PC-3 (cell line): ENCODE measurements at regions of chr18 and their contacts with region 1.

Region 1: DNA sequence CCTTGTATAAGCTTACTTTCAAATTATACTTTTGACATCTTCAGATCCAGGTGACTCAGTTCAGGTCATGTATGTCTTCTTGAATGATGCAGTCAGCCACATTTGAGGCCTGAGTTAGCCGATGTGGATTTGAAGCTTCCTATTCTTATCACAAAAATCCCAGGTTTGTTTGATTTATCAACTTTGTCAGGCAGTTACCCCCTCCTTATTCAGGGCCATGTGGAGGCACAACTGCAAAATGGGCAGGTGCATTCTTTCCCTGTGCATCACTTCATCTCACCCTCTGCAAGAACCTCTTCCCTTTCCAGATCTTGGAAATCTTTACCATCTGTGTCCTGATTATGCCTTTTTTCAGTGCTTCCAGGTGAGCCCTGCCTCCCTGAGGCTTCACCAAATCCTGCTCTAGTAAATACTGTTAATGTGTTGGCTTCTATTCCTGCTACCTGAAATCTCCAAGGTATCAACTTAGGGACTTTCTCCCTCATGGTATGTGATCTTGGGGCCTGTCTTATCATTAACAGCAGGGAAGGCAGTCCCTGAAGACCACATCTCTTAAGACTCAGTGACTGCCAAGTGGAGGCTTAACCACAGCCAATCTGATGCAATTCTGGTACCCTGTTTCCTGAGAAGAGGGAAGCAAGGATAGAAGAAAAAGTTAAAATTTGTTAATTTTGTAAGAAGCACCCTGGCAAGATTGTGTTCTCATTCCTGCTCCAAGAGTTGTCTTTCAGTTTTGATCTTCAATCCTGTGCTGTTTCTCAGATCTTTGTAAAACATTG is 9.4 kb upstream of the ARHGAP28 start:
- DNase-seq: peak; percentile 74
- ATAC-seq: peak; percentile 27
- H3K4me3 ChIP-seq: peak overlapping the region; percentile 16; the same call in 1 of the 2 replicates
- H3K27ac ChIP-seq: peak overlapping the region; percentile 92
- H3K4me1 ChIP-seq: peaks cover 46% of the 10 kb centered on the region
- H3K27me3 ChIP-seq: no peaks in the 10 kb centered on the region
- CTCF ChIP-seq: no peak

Region 2: GRCh38 chr18:6605115-6605869 is 114.8 kb before region 1 on chr18:
- CTCF ChIA-PET with region 1: no interaction called
- POLR2A ChIA-PET with region 1: no interaction called
- intact Hi-C with region 1: loop called (anchors 1 kb)
- DNase-seq: peak; percentile 61
- ATAC-seq: peak; percentile 72
- H3K4me3 ChIP-seq: no peak overlapping the region
- H3K27ac ChIP-seq: peak overlapping the region; percentile 26; the same call in 1 of the 2 replicates
- H3K4me1 ChIP-seq: peaks cover 40% of the 10 kb centered on the region
- H3K27me3 ChIP-seq: no peaks in the 10 kb centered on the region
- CTCF ChIP-seq: no peak

Region 3: DNA sequence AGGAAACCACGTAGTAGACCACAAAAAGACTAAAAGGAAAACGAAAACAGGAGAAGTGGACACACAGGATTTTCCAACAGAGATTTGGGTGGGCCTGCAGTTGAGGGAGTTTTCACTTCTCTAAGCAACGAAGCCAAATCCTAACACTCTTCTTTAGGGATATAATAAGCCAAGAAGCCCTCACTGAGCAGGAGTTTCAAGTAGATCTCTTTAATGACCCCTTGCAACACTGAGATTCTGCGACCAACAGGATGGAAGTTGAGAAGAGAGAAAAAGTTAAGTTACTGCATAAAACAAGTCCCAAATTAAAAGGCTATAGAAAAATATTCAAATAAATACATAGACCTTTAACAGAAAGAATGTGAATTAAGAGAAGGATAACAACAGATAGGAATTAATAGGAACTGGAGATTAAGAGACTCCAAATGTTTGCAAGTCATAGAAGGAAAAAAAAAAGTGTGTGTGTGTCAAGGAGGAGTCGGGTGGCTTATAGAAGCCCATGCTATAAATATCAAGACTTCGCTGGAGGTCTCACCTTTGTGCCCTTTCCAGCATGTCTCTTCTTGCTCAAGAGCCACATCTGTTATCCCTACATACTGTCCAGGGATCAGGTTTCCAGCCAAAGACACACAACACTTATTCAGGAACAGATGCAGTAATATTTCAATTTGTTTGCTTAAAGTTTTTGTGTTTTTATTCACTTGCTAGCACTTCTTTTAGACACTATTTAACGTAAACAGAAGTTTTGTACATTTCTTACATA is 60.0 kb before region 1 on chr18:
- CTCF ChIA-PET with region 1: no interaction called
- POLR2A ChIA-PET with region 1: no interaction called
- intact Hi-C with region 1: loop called (anchors 1 kb)
- DNase-seq: no peak
- ATAC-seq: no peak
- H3K4me3 ChIP-seq: no peak overlapping the region
- H3K27ac ChIP-seq: no peak overlapping the region
- H3K4me1 ChIP-seq: peaks cover 14% of the 10 kb centered on the region
- H3K27me3 ChIP-seq: no peaks in the 10 kb centered on the region
- CTCF ChIP-seq: no peak

Region 4: GRCh38 chr18:6747646-6748045 is 27.5 kb after region 1 on chr18:
- CTCF ChIA-PET with region 1: no interaction called
- POLR2A ChIA-PET with region 1: no interaction called
- intact Hi-C with region 1: loop called (anchors 2 kb)
- DNase-seq: peak; percentile 95
- ATAC-seq: peak; percentile 98
- H3K4me3 ChIP-seq: no peak overlapping the region
- H3K27ac ChIP-seq: peak overlapping the region; percentile 46
- H3K4me1 ChIP-seq: peaks cover 31% of the 10 kb centered on the region
- H3K27me3 ChIP-seq: no peaks in the 10 kb centered on the region
- CTCF ChIP-seq: no peak

Region 5: GRCh38 chr18:6764382-6764781 is 44.3 kb after region 1 on chr18:
- CTCF ChIA-PET with region 1: no interaction called
- POLR2A ChIA-PET with region 1: no interaction called
- intact Hi-C with region 1: no loop called
- DNase-seq: no peak
- ATAC-seq: no peak
- H3K4me3 ChIP-seq: no peak overlapping the region
- H3K27ac ChIP-seq: no peak overlapping the region
- H3K4me1 ChIP-seq: no peaks in the 10 kb centered on the region
- H3K27me3 ChIP-seq: no peaks in the 10 kb centered on the region
- CTCF ChIP-seq: no peak

Region 6: GRCh38 chr18:6776188-6776587 is 56.1 kb after region 1 on chr18:
- CTCF ChIA-PET with region 1: no interaction called
- POLR2A ChIA-PET with region 1: no interaction called
- intact Hi-C with region 1: no loop called
- DNase-seq: no peak
- ATAC-seq: no peak
- H3K4me3 ChIP-seq: no peak overlapping the region
- H3K27ac ChIP-seq: no peak overlapping the region
- H3K4me1 ChIP-seq: peaks cover 10% of the 10 kb centered on the region
- H3K27me3 ChIP-seq: no peaks in the 10 kb centered on the region
- CTCF ChIP-seq: no peak

Region 7: GRCh38 chr18:6874316-6874715 is 154.2 kb after region 1 on chr18:
- CTCF ChIA-PET with region 1: no interaction called
- POLR2A ChIA-PET with region 1: no interaction called
- intact Hi-C with region 1: loop called (anchors 1 kb)
- DNase-seq: peak; percentile 44
- ATAC-seq: peak; percentile 46; the same call in 1 of the 2 replicates
- H3K4me3 ChIP-seq: no peak overlapping the region
- H3K27ac ChIP-seq: no peak overlapping the region
- H3K4me1 ChIP-seq: no peaks in the 10 kb centered on the region
- H3K27me3 ChIP-seq: no peaks in the 10 kb centered on the region
- CTCF ChIP-seq: peak; percentile 63